Activated CD8-positive, alpha-beta T cell treated with anti-CD3 and anti-CD28 coated beads for 36 hours (primary cell): ENCODE measurements at regions of chr2 and their contacts with region 1.

Region 1: GRCh38 chr2:222707689-222708525 is 36.4 kb downstream of the MOGAT1 start:
- DNase-seq: peak; percentile 88
- ATAC-seq: peak; percentile 93
- H3K4me3 Mint-ChIP-seq: no peak overlapping the region
- H3K27ac Mint-ChIP-seq: no peak overlapping the region
- H3K4me1 Mint-ChIP-seq: peaks cover 6% of the 10 kb centered on the region
- H3K27me3 Mint-ChIP-seq: peaks cover 15% of the 10 kb centered on the region
- CTCF ChIP-seq: peak; percentile 95

Region 2: DNA sequence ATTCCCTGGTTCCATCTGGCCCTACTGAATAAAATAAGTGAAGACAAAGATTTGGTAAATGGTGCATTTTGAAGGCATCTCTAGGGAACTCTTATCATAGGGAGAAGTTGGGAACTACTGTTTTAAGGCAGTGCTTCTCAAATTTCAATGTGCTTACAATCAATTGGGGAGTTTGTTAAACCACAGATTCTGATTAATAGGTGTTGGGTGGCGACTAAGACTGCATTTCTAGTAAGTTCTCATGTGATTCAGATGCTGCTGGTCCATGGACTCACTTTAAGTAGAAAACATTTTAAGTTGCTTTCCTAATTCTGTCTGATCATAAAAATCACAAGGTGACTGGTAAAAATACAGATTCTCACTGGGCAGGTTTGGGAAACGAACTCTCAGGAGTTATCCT is 66.6 kb before region 1 on chr2:
- CTCF ChIA-PET with region 1: no interaction called
- POLR2A ChIA-PET with region 1: no interaction called
- intact Hi-C with region 1: no loop called
- DNase-seq: no peak
- ATAC-seq: no peak
- H3K4me3 Mint-ChIP-seq: no peak overlapping the region
- H3K27ac Mint-ChIP-seq: no peak overlapping the region
- H3K4me1 Mint-ChIP-seq: peaks cover 7% of the 10 kb centered on the region
- H3K27me3 Mint-ChIP-seq: no peaks in the 10 kb centered on the region
- CTCF ChIP-seq: no peak

Region 3: GRCh38 chr2:222722327-222722946 is 14.5 kb after region 1 on chr2:
- CTCF ChIA-PET with region 1: interaction called, 14 read pairs
- POLR2A ChIA-PET with region 1: no interaction called
- intact Hi-C with region 1: no loop called
- DNase-seq: no peak
- ATAC-seq: peak; percentile 37
- H3K4me3 Mint-ChIP-seq: no peak overlapping the region
- H3K27ac Mint-ChIP-seq: no peak overlapping the region
- H3K4me1 Mint-ChIP-seq: no peaks in the 10 kb centered on the region
- H3K27me3 Mint-ChIP-seq: no peaks in the 10 kb centered on the region
- CTCF ChIP-seq: no peak

Region 4: DNA sequence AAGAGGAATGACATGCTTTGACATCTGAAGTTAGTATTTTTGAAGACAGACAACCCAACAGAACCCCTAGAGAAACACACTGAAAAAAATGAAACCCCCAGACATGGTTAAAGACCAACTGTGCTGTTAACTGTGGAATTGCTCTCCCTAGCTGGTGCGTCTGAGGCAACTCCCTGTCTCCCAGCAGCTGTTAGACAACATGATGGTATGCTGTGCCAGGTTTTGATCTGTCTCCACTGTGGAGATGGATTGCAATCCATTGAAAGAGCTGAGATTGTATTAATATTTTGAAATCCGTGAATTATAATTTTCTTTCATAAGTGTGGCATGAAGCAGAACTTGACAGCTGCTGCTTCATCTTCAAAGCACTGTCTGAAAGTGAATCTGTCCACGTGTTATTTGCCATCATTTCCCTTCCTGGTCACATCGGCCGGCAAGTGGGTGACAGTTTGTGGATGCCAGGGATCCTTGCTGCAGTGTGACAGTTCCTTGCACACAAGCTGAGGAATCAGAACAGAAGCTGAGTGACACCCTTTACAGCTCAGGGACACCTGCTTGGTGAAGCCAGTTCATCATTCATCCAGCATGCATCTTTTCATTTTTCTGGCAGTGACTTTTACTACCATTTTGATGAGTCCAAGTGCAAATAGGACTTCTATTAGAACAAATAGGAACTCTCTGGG is 94.7 kb after region 1 on chr2:
- CTCF ChIA-PET with region 1: no interaction called
- POLR2A ChIA-PET with region 1: no interaction called
- intact Hi-C with region 1: no loop called
- DNase-seq: no peak
- ATAC-seq: no peak
- H3K4me3 Mint-ChIP-seq: no peak overlapping the region
- H3K27ac Mint-ChIP-seq: no peak overlapping the region
- H3K4me1 Mint-ChIP-seq: no peaks in the 10 kb centered on the region
- H3K27me3 Mint-ChIP-seq: peaks cover 4% of the 10 kb centered on the region
- CTCF ChIP-seq: no peak

Region 5: DNA sequence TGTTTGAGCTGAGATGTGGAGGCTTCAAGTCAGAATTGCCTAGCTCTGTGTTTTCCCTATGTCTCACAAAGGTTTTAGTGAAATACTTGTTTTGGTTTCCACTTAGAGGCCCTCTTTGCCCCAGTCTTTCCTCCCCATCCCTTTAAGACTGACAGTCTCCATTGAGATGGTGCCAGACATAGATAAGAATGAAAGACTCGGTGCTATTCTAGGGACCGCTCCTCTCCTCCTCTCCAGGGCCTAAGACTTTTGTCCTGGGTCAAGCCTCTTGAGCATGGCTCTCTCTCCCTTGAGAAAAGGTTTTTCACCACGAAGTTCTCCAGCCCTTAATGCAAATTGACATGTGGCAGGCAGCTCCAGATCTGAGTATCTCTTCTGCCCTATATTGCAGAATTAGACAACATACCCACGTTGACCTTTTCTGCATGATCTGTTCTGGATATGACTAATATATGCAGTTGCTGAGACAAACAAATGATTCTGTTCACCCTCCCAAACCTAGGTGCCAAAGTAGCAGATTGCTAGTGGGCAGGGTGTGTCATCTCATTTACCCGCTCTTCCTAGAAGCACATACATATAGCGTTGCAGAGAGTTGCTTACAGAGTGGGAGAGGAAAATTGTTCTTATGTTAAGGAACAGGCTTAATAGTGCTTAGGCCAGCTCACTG is 105.4 kb after region 1 on chr2:
- CTCF ChIA-PET with region 1: no interaction called
- POLR2A ChIA-PET with region 1: no interaction called
- intact Hi-C with region 1: loop called (anchors 5 kb)
- DNase-seq: peak; percentile 60
- ATAC-seq: peak; percentile 92
- H3K4me3 Mint-ChIP-seq: peak overlapping the region; percentile 34
- H3K27ac Mint-ChIP-seq: peak overlapping the region; percentile 91
- H3K4me1 Mint-ChIP-seq: peaks cover 21% of the 10 kb centered on the region
- H3K27me3 Mint-ChIP-seq: no peaks in the 10 kb centered on the region
- CTCF ChIP-seq: no peak

Region 6: DNA sequence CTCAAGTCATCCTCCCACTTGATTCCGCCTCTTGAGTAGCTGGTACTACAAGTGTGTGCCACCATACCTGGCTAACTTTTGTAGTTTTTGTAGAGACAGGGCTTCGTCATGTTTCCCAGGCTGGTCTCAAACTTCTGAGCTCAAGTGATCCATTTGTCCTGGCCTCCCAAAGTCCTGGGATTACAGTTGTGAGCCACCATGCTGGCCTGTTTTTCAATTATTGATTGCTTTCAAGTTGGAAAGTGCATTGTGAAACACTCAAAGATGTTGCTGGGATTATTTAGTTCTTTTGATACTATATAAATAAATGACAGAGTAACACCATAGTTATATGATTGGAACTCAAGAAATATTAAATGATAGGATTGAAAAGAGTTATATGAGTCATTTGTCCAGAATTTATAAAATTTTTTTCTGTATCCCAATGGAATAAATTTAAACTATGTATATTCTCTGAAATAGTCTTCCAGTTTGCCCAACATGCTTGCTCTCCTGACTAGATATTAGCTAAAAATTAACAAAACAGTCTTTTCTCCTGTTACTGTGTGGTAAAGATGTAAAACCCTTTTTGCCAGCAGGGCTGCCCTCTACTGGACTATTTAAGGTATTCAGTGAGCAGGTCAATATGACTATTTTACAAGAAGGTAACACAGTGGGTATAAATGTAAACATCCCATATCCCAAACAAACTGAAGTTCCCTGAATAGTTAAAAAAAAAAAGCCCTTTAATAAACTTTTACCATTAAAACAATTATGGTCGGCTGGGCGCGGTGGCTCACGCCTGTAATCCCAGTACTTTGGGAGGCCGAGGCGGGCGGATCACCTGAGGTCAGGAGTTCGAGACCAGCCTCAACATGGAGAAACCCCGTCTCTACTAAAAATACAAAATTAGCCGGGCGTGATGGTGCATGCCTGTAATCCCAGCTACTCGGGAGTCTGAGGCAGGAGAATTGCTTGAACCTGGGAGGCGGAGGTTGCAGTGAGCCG is 195.6 kb after region 1 on chr2:
- CTCF ChIA-PET with region 1: interaction called, 65 read pairs
- POLR2A ChIA-PET with region 1: no interaction called
- intact Hi-C with region 1: loop called (anchors 1 kb)
- DNase-seq: peak; percentile 61
- ATAC-seq: peak; percentile 80
- H3K4me3 Mint-ChIP-seq: no peak overlapping the region
- H3K27ac Mint-ChIP-seq: no peak overlapping the region
- H3K4me1 Mint-ChIP-seq: peaks cover 25% of the 10 kb centered on the region
- H3K27me3 Mint-ChIP-seq: no peaks in the 10 kb centered on the region
- CTCF ChIP-seq: peak; percentile 73

Region 7: GRCh38 chr2:222939208-222939856 is 231.4 kb after region 1 on chr2:
- CTCF ChIA-PET with region 1: interaction called, 48 read pairs
- POLR2A ChIA-PET with region 1: interaction called, 3 read pairs
- intact Hi-C with region 1: no loop called
- DNase-seq: peak; percentile 80
- ATAC-seq: peak; percentile 94
- H3K4me3 Mint-ChIP-seq: no peak overlapping the region
- H3K27ac Mint-ChIP-seq: no peak overlapping the region
- H3K4me1 Mint-ChIP-seq: peaks cover 18% of the 10 kb centered on the region
- H3K27me3 Mint-ChIP-seq: no peaks in the 10 kb centered on the region
- CTCF ChIP-seq: peak; percentile 86